Right cardiac atrium (tissue), 5 donors: ENCODE measurements at regions of chr21 and their contacts with region 1.

Region 1: GRCh38 chr21:31866077-31866511 is 6.7 kb upstream of the HUNK start:
- DNase-seq: peak; percentile 88 to 95 (median 94)
- ATAC-seq: peak; percentile 93
- H3K4me3 ChIP-seq: no peak overlapping the region
- H3K27ac ChIP-seq: no peak overlapping the region
- H3K4me1 ChIP-seq: peaks cover 2% of the 10 kb centered on the region
- H3K27me3 ChIP-seq: no peaks in the 10 kb centered on the region

Region 2: GRCh38 chr21:31781737-31782136 is 84.4 kb before region 1 on chr21:
- intact Hi-C with region 1: loop called in 1 of 4 experiments (anchors 10 kb)
- DNase-seq: peak; percentile 42 to 62 (median 59)
- ATAC-seq: peak; percentile 56 to 77
- H3K4me3 ChIP-seq: no peak overlapping the region
- H3K27ac ChIP-seq: no peak overlapping the region
- H3K4me1 ChIP-seq: peaks cover 2% of the 10 kb centered on the region
- H3K27me3 ChIP-seq: no peaks in the 10 kb centered on the region